PC-3 (cell line): ENCODE measurements at regions of chr13 and their contacts with region 1.

Region 1: DNA sequence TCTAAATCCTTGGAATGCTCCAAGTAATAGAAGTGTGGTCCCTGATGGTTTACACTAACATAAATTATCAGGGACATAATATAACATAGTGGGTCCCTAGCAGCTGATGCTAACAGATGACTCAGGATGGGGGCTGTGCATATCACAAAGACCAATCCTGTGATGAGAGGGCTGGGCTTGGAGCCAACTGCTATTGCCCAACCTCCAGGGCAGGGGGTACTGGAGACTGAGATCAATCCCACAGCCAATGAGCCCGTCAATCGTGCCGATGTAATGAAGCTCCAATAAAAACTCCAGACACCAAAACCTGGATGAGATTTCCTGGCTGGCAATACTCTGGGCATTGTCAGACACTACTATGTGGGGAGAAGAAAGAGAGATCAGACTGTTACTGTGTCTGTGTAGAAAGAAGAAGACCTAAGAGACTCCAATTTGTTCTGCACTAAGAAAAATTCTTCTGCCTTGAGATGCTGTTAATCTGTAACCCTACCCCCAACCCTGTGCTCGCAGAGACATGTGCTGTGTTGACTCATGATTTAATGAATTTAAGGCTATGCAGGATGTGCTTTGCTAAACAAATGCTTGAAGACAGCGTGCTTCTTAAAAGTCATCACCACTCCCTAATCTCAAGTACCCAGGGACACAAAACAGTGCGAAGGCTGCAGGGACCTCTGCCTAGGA is 33.4 kb downstream of the ABCC4 start:
- DNase-seq: peak; percentile 56
- ATAC-seq: no peak
- H3K4me3 ChIP-seq: no peak overlapping the region
- H3K27ac ChIP-seq: peak overlapping the region; percentile 67
- H3K4me1 ChIP-seq: peaks cover 42% of the 10 kb centered on the region
- H3K27me3 ChIP-seq: no peaks in the 10 kb centered on the region
- CTCF ChIP-seq: no peak

Region 2: DNA sequence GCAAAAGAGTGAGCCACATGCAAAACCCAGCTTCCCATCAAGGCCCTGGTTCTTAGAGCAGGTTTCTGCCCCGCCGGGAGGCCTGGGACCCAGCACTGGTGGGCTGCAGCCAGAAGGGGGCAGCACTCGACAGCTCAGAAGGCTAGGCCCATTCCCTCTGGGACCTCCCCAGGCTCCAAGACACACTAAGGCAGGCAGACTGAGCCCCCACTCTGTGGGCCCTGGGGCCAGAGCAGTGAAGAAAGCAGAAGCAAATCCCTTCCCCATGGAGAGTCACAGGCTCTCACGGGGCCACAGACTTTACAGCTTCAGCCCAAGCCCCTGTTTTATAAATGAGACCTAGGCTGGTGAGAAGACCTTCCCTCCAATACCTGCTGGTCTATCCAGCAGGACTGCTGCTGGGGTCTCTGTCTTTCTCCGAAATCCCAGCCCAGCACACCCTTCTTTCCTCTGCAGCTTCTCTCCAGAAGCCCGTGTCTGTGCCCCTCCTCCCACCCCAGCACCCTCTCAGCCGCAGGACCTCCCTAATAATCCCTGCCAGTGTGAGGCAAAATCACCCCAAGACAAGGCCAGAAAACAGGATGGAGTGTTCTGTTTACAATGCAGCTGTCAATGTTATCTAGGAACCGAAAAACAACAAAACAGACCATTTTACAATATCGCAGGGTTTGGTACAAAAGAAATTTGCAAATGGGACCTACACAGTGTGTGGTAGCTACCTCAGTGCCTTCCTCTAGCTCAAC is 75.8 kb before region 1 on chr13:
- CTCF ChIA-PET with region 1: interaction called, 3 read pairs
- POLR2A ChIA-PET with region 1: no interaction called
- intact Hi-C with region 1: loop called (anchors 5 kb)
- DNase-seq: peak; percentile 73
- ATAC-seq: peak; percentile 99
- H3K4me3 ChIP-seq: no peak overlapping the region
- H3K27ac ChIP-seq: no peak overlapping the region
- H3K4me1 ChIP-seq: no peaks in the 10 kb centered on the region
- H3K27me3 ChIP-seq: no peaks in the 10 kb centered on the region
- CTCF ChIP-seq: peak; percentile 88

Region 3: GRCh38 chr13:95217920-95218830 is 49.6 kb before region 1 on chr13:
- CTCF ChIA-PET with region 1: no interaction called
- POLR2A ChIA-PET with region 1: no interaction called
- intact Hi-C with region 1: loop called (anchors 1 kb)
- DNase-seq: peak; percentile 9
- ATAC-seq: peak; percentile 50
- H3K4me3 ChIP-seq: no peak overlapping the region
- H3K27ac ChIP-seq: peak overlapping the region; percentile 41
- H3K4me1 ChIP-seq: peaks cover 14% of the 10 kb centered on the region
- H3K27me3 ChIP-seq: no peaks in the 10 kb centered on the region
- CTCF ChIP-seq: no peak

Region 4: DNA sequence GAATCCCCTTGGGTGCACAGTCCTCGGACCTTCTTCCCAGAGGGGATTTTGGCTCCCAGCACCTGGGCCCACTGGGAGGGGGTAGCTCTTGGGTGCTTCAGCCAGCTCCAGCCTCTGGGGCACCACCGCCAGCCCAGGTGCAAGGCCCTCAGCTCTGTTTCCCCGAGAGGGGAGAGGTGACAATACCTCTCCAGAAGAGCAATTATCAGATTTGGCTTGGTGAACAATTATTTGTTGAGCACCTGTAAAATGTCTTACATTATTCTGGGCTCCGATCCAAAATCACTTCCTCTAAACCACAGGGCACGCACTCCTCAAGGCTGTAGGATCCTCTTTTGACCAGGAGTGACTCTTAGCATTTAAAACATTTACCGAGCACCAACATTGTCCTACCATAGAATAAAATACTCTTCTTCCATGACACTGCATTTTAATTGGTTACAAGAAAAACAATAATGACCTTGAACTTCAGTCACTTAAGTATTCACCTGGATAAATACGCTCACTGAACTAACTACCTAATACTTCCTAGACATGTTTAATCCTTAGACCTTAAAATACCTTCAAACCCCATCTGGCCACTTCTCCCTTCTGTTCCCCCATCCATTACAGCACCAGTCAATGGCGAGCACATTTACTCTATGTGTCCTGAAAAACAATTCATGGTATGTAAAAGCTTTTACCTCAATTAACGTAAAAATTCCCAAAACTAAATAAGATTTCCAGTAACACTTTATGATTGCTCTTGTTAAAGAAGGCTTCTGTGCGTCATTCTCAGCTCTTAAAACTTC is 21.3 kb before region 1 on chr13:
- CTCF ChIA-PET with region 1: no interaction called
- POLR2A ChIA-PET with region 1: no interaction called
- intact Hi-C with region 1: loop called (anchors 1 kb)
- DNase-seq: peak; percentile 82
- ATAC-seq: peak; percentile 97
- H3K4me3 ChIP-seq: no peak overlapping the region
- H3K27ac ChIP-seq: peak overlapping the region; percentile 48
- H3K4me1 ChIP-seq: peaks cover 18% of the 10 kb centered on the region
- H3K27me3 ChIP-seq: no peaks in the 10 kb centered on the region
- CTCF ChIP-seq: no peak

Region 5: GRCh38 chr13:95256086-95256485 is 11.7 kb before region 1 on chr13:
- CTCF ChIA-PET with region 1: no interaction called
- POLR2A ChIA-PET with region 1: no interaction called
- intact Hi-C with region 1: loop called (anchors 1 kb)
- DNase-seq: peak; percentile 94
- ATAC-seq: peak; percentile 97
- H3K4me3 ChIP-seq: no peak overlapping the region
- H3K27ac ChIP-seq: peak overlapping the region; percentile 45
- H3K4me1 ChIP-seq: peaks cover 34% of the 10 kb centered on the region
- H3K27me3 ChIP-seq: no peaks in the 10 kb centered on the region
- CTCF ChIP-seq: no peak